Body of pancreas (tissue), 4 donors: ENCODE measurements at regions of chr16 and their contacts with region 1.

Region 1: GRCh38 chr16:8310323-8310722 is 280.0 kb downstream of the TMEM114 start:
- DNase-seq: no peak
- ATAC-seq: no peak
- H3K4me3 ChIP-seq: no peak overlapping the region
- H3K27ac ChIP-seq: no peak overlapping the region
- H3K4me1 ChIP-seq: no peaks in the 10 kb centered on the region
- H3K27me3 ChIP-seq: no peaks in the 10 kb centered on the region
- CTCF ChIP-seq: no peak
- POLR2A ChIP-seq: no peak

Region 2: GRCh38 chr16:7200320-7200719 is 1110.0 kb before region 1 on chr16:
- intact Hi-C with region 1: no loop called
- DNase-seq: no peak
- ATAC-seq: no peak
- H3K4me3 ChIP-seq: no peak overlapping the region
- H3K27ac ChIP-seq: no peak overlapping the region
- H3K4me1 ChIP-seq: no peaks in the 10 kb centered on the region
- H3K27me3 ChIP-seq: no peaks in the 10 kb centered on the region
- CTCF ChIP-seq: no peak
- POLR2A ChIP-seq: no peak

Region 3: DNA sequence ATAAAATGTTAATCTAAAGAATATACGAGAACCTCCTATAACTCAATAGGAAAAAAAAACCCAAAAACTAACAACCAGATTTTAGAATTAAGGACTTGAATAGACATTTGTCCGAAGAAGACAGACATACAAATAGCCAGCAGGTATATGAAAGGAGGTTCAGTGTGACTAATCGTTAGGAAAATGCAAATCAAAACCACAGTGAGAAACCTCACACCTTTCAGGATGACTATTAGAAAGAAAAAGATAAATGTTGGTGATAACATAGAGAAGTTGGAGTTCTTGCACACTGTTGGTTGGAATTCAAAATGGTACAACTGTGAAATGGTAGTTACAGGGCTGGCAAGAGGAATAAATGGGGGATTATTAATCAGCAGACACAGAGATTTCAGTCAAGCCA is 59.0 kb before region 1 on chr16:
- intact Hi-C with region 1: no loop called
- DNase-seq: no peak
- ATAC-seq: no peak
- H3K4me3 ChIP-seq: no peak overlapping the region
- H3K27ac ChIP-seq: no peak overlapping the region
- H3K4me1 ChIP-seq: no peaks in the 10 kb centered on the region
- H3K27me3 ChIP-seq: no peaks in the 10 kb centered on the region
- CTCF ChIP-seq: no peak
- POLR2A ChIP-seq: no peak

Region 4: DNA sequence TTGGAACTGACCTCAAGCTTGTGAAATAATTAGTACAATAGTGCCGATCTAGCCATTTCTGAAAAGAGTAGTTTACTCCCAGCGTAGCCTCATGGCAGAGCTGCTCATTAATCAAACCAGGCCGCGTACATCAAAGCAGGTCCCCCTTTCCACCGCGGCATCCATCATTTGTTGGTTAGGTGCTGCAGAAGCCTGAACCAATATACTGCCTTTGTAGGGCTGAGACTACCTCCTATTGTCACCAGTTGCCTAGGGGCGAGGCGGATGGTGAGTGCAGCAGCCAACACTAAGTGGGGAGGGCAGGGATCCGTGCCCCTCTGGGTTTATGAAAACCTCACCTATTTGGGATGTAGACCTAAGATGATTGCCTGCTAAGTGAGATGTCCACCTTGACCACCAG is 15.9 kb after region 1 on chr16:
- intact Hi-C with region 1: no loop called
- DNase-seq: no peak
- ATAC-seq: no peak
- H3K4me3 ChIP-seq: no peak overlapping the region
- H3K27ac ChIP-seq: no peak overlapping the region
- H3K4me1 ChIP-seq: peaks cover 9% of the 10 kb centered on the region
- H3K27me3 ChIP-seq: no peaks in the 10 kb centered on the region
- CTCF ChIP-seq: no peak
- POLR2A ChIP-seq: no peak

Region 5: DNA sequence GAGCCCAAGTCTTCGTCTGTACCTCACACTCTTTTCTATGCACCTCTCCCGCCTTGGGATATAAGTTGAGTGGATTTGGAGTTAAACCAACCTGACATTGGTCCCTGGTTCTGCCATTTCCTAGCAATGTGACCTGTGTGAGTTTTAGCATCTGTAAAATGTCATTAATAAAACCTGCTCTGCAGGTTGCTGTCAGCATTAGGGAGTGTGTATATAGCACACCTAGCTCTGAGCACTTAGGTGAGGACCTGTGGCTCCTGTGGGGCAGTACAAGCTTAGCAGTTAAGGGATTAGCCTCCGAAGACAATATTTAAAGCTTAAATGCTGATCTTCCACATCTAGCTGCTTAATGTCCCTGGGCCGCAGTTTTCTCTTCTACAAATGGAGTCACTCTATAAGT is 32.0 kb after region 1 on chr16:
- intact Hi-C with region 1: loop called (anchors 2 kb)
- DNase-seq: peak; percentile 13 to 55 (median 51)
- ATAC-seq: peak; percentile 81
- H3K4me3 ChIP-seq: no peak overlapping the region
- H3K27ac ChIP-seq: no peak overlapping the region
- H3K4me1 ChIP-seq: peaks cover 11% of the 10 kb centered on the region
- H3K27me3 ChIP-seq: no peaks in the 10 kb centered on the region
- CTCF ChIP-seq: peak in 3 of 7 experiments; percentile 5 to 14 (median 12)
- POLR2A ChIP-seq: no peak